Caco-2 (cell line): ENCODE measurements at regions of chr9 and their contacts with region 1.

Region 1: GRCh38 chr9:385818-386398 is 171.2 kb downstream of the DOCK8 start:
- DNase-seq: peak; percentile 55 to 63
- H3K4me3 ChIP-seq: no peak overlapping the region
- H3K4me3 Mint-ChIP-seq: no peak overlapping the region
- H3K27ac Mint-ChIP-seq: no peak overlapping the region
- H3K4me1 ChIP-seq: peaks cover 13% of the 10 kb centered on the region; the same call in 1 of the 2 replicates
- H3K4me1 Mint-ChIP-seq: no peaks in the 10 kb centered on the region
- H3K27me3 ChIP-seq: no peaks in the 10 kb centered on the region
- H3K27me3 Mint-ChIP-seq: no peaks in the 10 kb centered on the region
- CTCF ChIP-seq: peak; percentile 82 to 83

Region 2: DNA sequence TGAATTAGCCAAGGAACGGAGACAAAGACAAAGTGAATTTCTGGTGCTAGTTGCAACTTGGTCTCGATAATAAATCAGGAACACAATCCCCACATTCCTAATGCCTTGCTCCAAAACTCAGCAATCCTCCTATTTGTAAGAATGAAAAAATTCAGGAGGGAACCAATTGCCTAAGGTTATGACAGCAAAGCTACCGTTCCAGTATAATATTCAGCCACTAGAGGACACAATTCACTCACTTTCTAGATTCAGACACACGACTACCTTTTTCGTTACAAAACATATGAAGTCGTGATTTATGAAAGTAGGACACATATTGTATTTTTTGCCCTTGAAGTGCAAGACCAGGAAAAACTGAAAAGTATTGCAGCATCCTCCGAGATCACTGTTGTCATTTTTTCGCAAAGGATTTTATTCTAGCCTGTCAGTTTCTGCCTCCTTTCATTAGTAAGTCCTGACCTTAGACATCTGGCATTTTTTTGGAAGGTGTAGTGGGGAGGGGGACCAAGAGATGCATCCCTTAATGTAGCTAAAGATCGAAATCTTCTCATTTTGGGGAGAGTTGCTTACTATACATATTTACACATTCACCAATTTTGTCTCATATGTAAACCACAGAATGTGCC is 38.1 kb before region 1 on chr9:
- CTCF ChIA-PET with region 1: no interaction called
- POLR2A ChIA-PET with region 1: no interaction called
- intact Hi-C with region 1: loop called (anchors 1 kb)
- DNase-seq: peak in 1 of 2 experiments; percentile 49
- H3K4me3 ChIP-seq: no peak overlapping the region
- H3K4me3 Mint-ChIP-seq: no peak overlapping the region
- H3K27ac Mint-ChIP-seq: no peak overlapping the region
- H3K4me1 ChIP-seq: no peaks in the 10 kb centered on the region
- H3K4me1 Mint-ChIP-seq: no peaks in the 10 kb centered on the region
- H3K27me3 ChIP-seq: no peaks in the 10 kb centered on the region
- H3K27me3 Mint-ChIP-seq: no peaks in the 10 kb centered on the region
- CTCF ChIP-seq: peak; percentile 67 to 77

Region 3: GRCh38 chr9:371349-371748 is 14.6 kb before region 1 on chr9:
- CTCF ChIA-PET with region 1: no interaction called
- POLR2A ChIA-PET with region 1: no interaction called
- intact Hi-C with region 1: no loop called
- DNase-seq: no peak
- H3K4me3 ChIP-seq: no peak overlapping the region
- H3K4me3 Mint-ChIP-seq: no peak overlapping the region
- H3K27ac Mint-ChIP-seq: no peak overlapping the region
- H3K4me1 ChIP-seq: peaks cover 24% of the 10 kb centered on the region
- H3K4me1 Mint-ChIP-seq: peaks cover 22% of the 10 kb centered on the region
- H3K27me3 ChIP-seq: no peaks in the 10 kb centered on the region
- H3K27me3 Mint-ChIP-seq: no peaks in the 10 kb centered on the region
- CTCF ChIP-seq: no peak

Region 4: GRCh38 chr9:503881-504852 is 118.3 kb after region 1 on chr9:
- CTCF ChIA-PET with region 1: no interaction called
- POLR2A ChIA-PET with region 1: no interaction called
- intact Hi-C with region 1: loop called (anchors 5 kb)
- DNase-seq: peak; percentile 83 to 92
- H3K4me3 ChIP-seq: peak within 1 kb of the TSS; percentile 90
- H3K4me3 Mint-ChIP-seq: peak within 1 kb of the TSS; percentile 84
- H3K27ac Mint-ChIP-seq: peak within 1 kb of the TSS; percentile 86
- H3K4me1 ChIP-seq: peaks cover 21% of the 10 kb centered on the region
- H3K4me1 Mint-ChIP-seq: peaks cover 15% of the 10 kb centered on the region
- H3K27me3 ChIP-seq: no peaks in the 10 kb centered on the region
- H3K27me3 Mint-ChIP-seq: no peaks in the 10 kb centered on the region
- CTCF ChIP-seq: peak; percentile 22 to 28

Region 5: DNA sequence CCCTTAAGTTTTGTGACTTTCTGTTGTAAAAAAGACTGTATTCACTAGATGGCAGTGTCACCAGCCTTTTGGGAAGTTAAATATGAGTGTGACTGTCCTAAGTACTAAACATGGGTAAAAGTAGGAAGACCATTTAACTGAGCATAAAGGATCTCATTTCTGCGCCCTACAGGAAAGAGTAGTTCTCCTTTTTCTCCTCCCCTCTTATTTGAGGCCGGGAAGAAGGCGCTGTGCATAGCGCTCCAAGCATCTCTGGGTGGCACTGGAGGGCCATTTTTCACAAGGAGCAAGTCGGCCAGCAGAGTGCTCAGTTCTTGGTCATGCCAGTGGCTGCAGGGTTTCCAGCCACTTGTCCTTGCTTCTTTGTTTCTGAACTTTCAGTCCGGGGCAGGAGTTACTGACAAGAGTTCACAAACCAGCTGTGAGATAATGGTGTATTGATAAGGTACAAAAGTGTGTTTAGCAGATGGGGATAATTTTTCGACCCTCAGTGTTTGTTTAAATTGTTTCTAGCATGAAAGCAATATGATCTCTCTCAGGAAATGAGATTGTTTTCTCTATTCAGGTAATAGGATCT is 228.0 kb after region 1 on chr9:
- CTCF ChIA-PET with region 1: interaction called, 3 read pairs
- POLR2A ChIA-PET with region 1: no interaction called
- intact Hi-C with region 1: loop called (anchors 2 kb)
- DNase-seq: peak; percentile 67 to 71
- H3K4me3 ChIP-seq: no peak overlapping the region
- H3K4me3 Mint-ChIP-seq: no peak overlapping the region
- H3K27ac Mint-ChIP-seq: no peak overlapping the region
- H3K4me1 ChIP-seq: peaks cover 40% of the 10 kb centered on the region
- H3K4me1 Mint-ChIP-seq: peaks cover 16% of the 10 kb centered on the region
- H3K27me3 ChIP-seq: no peaks in the 10 kb centered on the region
- H3K27me3 Mint-ChIP-seq: no peaks in the 10 kb centered on the region
- CTCF ChIP-seq: peak; percentile 53 to 65

Region 6: GRCh38 chr9:763692-764524 is 378.0 kb after region 1 on chr9:
- CTCF ChIA-PET with region 1: no interaction called
- POLR2A ChIA-PET with region 1: no interaction called
- intact Hi-C with region 1: loop called (anchors 1 kb)
- DNase-seq: peak; percentile 79 to 82
- H3K4me3 ChIP-seq: no peak overlapping the region
- H3K4me3 Mint-ChIP-seq: no peak overlapping the region
- H3K27ac Mint-ChIP-seq: no peak overlapping the region
- H3K4me1 ChIP-seq: no peaks in the 10 kb centered on the region; the same call in 1 of the 2 replicates
- H3K4me1 Mint-ChIP-seq: peaks cover 21% of the 10 kb centered on the region
- H3K27me3 ChIP-seq: no peaks in the 10 kb centered on the region
- H3K27me3 Mint-ChIP-seq: no peaks in the 10 kb centered on the region
- CTCF ChIP-seq: peak; percentile 61 to 65

Region 7: DNA sequence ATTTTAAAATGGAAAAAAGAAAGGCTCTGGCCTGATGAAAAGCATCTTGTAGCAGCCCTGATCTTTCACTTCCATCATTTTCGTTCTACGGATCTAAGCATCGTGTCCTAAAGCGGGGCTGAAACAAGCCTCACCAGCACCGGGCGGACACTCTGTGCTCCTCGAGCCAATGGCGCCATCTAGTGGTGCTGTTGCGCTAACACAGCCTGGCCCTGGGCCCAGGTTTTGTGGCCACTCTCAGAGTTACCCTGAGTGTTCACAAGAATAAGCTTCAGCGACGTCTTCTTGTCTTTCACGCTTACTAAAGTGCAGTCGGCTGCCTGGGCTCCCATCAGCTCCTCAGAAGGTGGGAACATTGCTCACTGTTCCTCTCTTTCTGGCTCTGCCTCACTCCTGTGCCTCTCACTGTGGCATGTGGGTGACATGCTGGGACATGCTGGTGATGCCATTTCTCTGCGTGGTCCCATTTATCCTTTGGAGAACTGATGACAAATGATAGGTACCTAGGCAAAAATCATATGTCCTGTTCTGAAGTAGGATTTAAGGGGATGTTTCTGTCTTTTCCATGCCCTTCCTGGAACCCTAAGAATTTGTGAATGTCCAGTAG is 623.3 kb after region 1 on chr9:
- CTCF ChIA-PET with region 1: no interaction called
- POLR2A ChIA-PET with region 1: no interaction called
- intact Hi-C with region 1: loop called (anchors 10 kb)
- DNase-seq: peak; percentile 56 to 81
- H3K4me3 ChIP-seq: no peak overlapping the region
- H3K4me3 Mint-ChIP-seq: no peak overlapping the region
- H3K27ac Mint-ChIP-seq: no peak overlapping the region
- H3K4me1 ChIP-seq: no peaks in the 10 kb centered on the region
- H3K4me1 Mint-ChIP-seq: no peaks in the 10 kb centered on the region
- H3K27me3 ChIP-seq: no peaks in the 10 kb centered on the region
- H3K27me3 Mint-ChIP-seq: peaks cover 3% of the 10 kb centered on the region
- CTCF ChIP-seq: peak; percentile 89 to 92